Posterior cingulate gyrus (tissue), 11 donors: ENCODE measurements at regions of chr18 and their contacts with region 1.

Region 1: GRCh38 chr18:286515-287310 is 18.9 kb upstream of the THOC1 start:
- DNase-seq: peak in 1 of 10 donors; percentile 13

Region 2: DNA sequence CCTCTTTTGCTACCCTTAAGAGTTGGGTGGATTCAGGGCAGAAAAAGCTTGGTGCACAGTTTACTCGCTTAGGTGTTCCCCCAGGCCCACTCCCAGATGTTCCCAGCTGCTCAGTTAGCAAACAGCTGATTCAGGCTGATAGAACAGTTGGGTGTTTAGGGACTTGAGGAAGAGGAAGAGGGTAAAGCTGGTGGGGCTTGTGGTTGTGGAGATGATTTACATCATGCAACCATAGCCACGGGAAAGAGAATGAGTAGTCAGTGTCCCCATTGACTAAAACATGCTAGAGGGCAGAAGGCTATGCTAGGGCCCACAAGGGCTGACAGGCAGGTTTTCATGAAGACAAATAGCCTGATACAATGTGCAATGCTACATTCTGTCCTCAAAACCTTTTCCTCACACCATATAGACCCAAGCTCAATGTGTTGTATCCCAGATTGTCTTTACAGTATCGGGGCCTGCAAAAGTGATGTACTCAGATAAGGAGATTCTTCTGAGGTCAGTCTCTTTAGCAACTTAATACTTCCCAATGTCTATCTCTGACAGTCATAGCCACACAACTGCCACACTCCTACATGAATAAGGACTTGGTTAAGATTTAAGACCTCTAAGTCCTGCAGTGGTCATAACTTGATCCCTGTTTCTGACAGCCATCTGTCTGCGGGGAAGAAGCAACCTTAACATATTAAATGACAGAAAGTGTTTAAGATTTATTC is 198.2 kb after region 1 on chr18:
- intact Hi-C with region 1: no loop called
- DNase-seq: no peak

Region 3: DNA sequence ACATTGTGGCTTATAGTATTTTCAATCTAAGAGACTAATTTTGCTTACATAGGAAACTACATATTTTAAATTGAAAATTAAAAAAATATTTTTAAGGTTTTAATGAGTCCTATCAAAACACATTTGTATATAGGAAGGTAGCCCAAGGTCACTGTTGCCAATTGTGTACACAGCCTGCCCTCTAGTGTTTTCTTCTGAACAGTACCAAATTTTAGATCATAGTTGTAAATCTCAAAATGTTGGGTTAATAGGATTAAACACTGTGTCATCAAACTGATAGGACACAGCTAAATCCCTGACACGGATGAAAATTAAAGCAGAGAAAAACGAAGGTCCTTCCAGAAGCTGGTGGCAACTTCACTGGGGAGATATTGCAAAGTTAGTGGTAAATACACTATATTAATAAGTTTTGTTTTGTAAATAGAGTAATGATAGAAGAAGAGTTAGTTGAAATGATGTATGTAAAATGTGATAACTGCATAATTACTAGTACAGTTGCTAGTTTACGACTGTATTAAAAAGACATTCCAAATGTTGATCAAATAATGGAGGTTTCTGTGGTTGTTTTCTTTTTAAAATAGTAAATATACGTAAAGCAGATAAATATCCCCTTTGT is 329.8 kb after region 1 on chr18:
- intact Hi-C with region 1: loop called (anchors 1 kb)
- DNase-seq: no peak

Region 4: DNA sequence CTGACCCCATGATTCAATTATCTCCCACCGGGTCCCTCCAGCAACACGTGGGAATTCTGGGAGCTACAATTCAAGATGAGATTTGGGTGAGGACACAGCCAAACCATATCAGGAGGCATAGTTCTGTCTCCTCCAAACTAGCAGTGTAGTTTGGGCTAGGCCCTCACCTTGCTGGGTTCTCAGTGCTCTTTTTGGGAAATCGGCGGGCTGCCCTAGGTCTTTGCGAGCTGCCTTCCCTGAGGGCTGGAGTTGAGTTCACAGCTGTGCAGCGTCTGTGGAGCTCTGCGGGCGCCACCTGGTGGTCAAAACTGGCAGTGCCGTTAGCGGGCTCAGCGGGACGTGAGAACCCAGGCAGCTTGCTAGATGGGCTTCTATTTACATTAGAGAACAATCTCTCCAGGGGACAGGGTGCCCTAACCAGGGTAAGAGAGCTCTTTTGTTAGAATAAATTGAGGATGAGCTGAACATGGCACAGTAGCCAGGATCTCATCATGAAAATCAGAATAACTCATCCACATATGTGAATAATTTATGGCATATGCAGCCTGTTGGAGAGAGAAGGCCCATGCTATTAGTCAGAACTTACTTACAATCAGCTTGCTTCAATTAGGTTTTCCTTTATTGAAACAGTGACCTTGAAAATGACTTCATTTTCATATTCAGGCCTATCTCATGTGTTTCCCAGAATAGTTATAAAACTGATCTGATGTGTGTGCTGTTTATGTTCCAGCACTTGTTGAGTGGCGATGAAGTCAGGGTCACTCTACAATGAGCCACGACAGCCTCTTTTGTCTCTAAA is 552.7 kb after region 1 on chr18:
- intact Hi-C with region 1: loop called (anchors 10 kb)
- DNase-seq: peak; percentile 63 to 97 (median 88)